T-cell (primary cell): ENCODE measurements at regions of chr19 and their contacts with region 1.

Region 1: DNA sequence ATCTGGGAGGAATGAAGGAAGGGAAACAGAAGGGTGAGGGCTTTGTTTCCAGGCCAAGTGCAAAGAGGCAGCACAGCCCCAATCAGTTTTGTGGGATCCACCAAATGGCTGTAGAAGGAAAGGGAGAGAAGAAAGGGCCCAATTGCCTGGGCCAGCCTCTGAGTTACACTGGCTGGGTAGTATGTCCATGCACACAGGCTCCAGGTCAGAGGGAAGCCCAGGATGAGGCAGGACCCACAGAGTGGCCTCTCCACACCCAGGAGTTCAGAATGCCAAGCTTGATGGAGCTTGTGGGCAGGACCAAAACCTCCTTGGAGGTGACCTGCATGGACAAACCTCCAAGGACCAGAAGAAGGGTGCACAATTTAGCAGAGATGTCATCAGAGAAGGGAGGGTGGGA is 178.2 kb upstream of the TSHZ3 start:
- DNase-seq: no peak
- ATAC-seq: no peak
- H3K4me3 ChIP-seq: no peak overlapping the region
- H3K4me3 Mint-ChIP-seq: no peak overlapping the region
- H3K27ac ChIP-seq: no peak overlapping the region
- H3K27ac Mint-ChIP-seq: no peak overlapping the region
- H3K4me1 ChIP-seq: no peaks in the 10 kb centered on the region
- H3K4me1 Mint-ChIP-seq: no peaks in the 10 kb centered on the region
- H3K27me3 ChIP-seq: peaks cover 0 to 5% of the 10 kb centered on the region in 2 experiments
- H3K27me3 Mint-ChIP-seq: peaks cover 9 to 20% of the 10 kb centered on the region in 2 donors

Region 2: GRCh38 chr19:31706691-31707620 is 179.5 kb after region 1 on chr19:
- CTCF ChIA-PET with region 1: no interaction called
- POLR2A ChIA-PET with region 1: interaction called in 1 of 2 experiments, 16 read pairs
- DNase-seq: no peak
- ATAC-seq: no peak
- H3K4me3 ChIP-seq: no peak overlapping the region
- H3K4me3 Mint-ChIP-seq: no peak overlapping the region
- H3K27ac ChIP-seq: no peak overlapping the region
- H3K27ac Mint-ChIP-seq: no peak overlapping the region
- H3K4me1 ChIP-seq: no peaks in the 10 kb centered on the region
- H3K4me1 Mint-ChIP-seq: no peaks in the 10 kb centered on the region
- H3K27me3 ChIP-seq: peaks cover 0 to 5% of the 10 kb centered on the region in 2 experiments
- H3K27me3 Mint-ChIP-seq: no peaks in the 10 kb centered on the region

Region 3: GRCh38 chr19:31725051-31725450 is 197.6 kb after region 1 on chr19:
- CTCF ChIA-PET with region 1: no interaction called
- POLR2A ChIA-PET with region 1: no interaction called
- DNase-seq: no peak
- ATAC-seq: no peak
- H3K4me3 ChIP-seq: no peak overlapping the region
- H3K4me3 Mint-ChIP-seq: no peak overlapping the region
- H3K27ac ChIP-seq: no peak overlapping the region
- H3K27ac Mint-ChIP-seq: no peak overlapping the region
- H3K4me1 ChIP-seq: no peaks in the 10 kb centered on the region
- H3K4me1 Mint-ChIP-seq: no peaks in the 10 kb centered on the region
- H3K27me3 ChIP-seq: peaks cover 2% of the 10 kb centered on the region in 2 experiments
- H3K27me3 Mint-ChIP-seq: peaks cover 0 to 5% of the 10 kb centered on the region in 2 donors